CD4-positive, alpha-beta T cell (primary cell): ENCODE measurements at regions of chr7 and their contacts with region 1.

Region 1: GRCh38 chr7:140924019-140924820 is 509 bp downstream of the BRAF start:
- DNase-seq: peak; percentile 46 to 94 (median 74)
- ATAC-seq: peak; percentile 61
- H3K4me3 ChIP-seq: peak overlapping the region; percentile 92
- H3K4me3 Mint-ChIP-seq: no peak overlapping the region
- H3K27ac ChIP-seq: peak overlapping the region; percentile 90 to 99
- H3K27ac Mint-ChIP-seq: no peak overlapping the region
- H3K4me1 ChIP-seq: peaks cover 12% of the 10 kb centered on the region
- H3K4me1 Mint-ChIP-seq: peaks cover 28% of the 10 kb centered on the region
- H3K27me3 ChIP-seq: no peaks in the 10 kb centered on the region
- H3K27me3 Mint-ChIP-seq: peaks cover 4% of the 10 kb centered on the region
- CTCF ChIP-seq: peak; percentile 13

Region 2: GRCh38 chr7:140397784-140398750 is 526.2 kb before region 1 on chr7 and contains the start of gene SLC37A3:
- CTCF ChIA-PET with region 1: no interaction called
- POLR2A ChIA-PET with region 1: no interaction called
- intact Hi-C with region 1: loop called in 1 of 2 experiments (anchors 10 kb)
- DNase-seq: peak; percentile 75 to 91 (median 84)
- ATAC-seq: peak; percentile 98
- H3K4me3 ChIP-seq: peak within 1 kb of the TSS; percentile 79
- H3K4me3 Mint-ChIP-seq: peak within 1 kb of the TSS; percentile 86
- H3K27ac ChIP-seq: peak within 1 kb of the TSS in 1 of 2 donors; percentile 53
- H3K27ac Mint-ChIP-seq: peak within 1 kb of the TSS; percentile 64
- H3K4me1 ChIP-seq: peaks cover 22% of the 10 kb centered on the region
- H3K4me1 Mint-ChIP-seq: peaks cover 33% of the 10 kb centered on the region
- H3K27me3 ChIP-seq: no peaks in the 10 kb centered on the region
- H3K27me3 Mint-ChIP-seq: no peaks in the 10 kb centered on the region
- CTCF ChIP-seq: no peak
- total RNA-seq, gene SLC37A3: 23.5 to 25.6 TPM

Region 3: DNA sequence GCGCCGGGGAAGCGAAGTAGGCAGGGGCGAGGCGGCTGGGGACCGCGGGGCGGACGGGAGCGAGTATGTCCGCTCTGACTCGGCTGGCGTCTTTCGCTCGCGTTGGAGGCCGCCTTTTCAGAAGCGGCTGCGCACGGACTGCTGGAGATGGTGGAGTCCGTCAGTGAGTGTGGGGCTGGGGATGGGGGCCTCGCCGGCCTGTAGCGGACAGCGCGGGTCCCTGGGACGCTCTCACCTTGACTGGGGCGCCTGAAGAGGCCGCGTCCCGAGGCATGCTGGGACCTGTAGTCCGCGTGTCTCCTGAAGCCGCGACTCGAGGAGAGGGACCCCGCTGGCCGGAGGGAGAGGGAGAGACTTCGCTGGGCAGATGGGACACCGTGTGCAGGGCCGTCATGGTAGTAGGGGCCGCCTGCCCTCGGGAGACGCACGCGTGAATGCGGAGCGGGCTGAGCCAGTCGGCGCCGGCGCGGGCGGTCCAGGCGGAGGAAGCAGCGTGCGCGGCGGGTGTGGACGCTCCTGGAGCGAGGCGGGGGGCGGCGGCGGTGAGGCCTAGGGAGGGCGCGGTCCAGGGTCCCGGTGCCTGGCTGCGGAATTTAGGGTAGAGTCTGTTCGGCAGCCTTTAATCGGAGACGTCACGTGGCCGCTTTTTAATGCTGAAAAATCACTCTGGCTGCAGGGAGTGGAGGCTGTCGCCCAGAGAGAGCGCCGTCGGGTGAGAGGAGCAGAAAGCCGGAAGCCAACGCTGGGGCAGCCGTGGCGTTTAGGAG is 227.4 kb before region 1 on chr7 and contains the start of gene NDUFB2:
- CTCF ChIA-PET with region 1: no interaction called
- POLR2A ChIA-PET with region 1: no interaction called
- intact Hi-C with region 1: loop called in 1 of 2 experiments (anchors 5 kb)
- DNase-seq: peak; percentile 43 to 86 (median 58)
- ATAC-seq: peak; percentile 75
- H3K4me3 ChIP-seq: peak within 1 kb of the TSS; percentile 97
- H3K4me3 Mint-ChIP-seq: peak within 1 kb of the TSS; percentile 100
- H3K27ac ChIP-seq: peak within 1 kb of the TSS; percentile 91 to 96
- H3K27ac Mint-ChIP-seq: peak within 1 kb of the TSS; percentile 100
- H3K4me1 ChIP-seq: peaks cover 33% of the 10 kb centered on the region
- H3K4me1 Mint-ChIP-seq: peaks cover 38% of the 10 kb centered on the region
- H3K27me3 ChIP-seq: no peaks in the 10 kb centered on the region
- H3K27me3 Mint-ChIP-seq: no peaks in the 10 kb centered on the region
- CTCF ChIP-seq: no peak
- total RNA-seq, gene NDUFB2: 73.7 to 84.4 TPM

Region 4: GRCh38 chr7:140810830-140811556 is 113.2 kb before region 1 on chr7:
- CTCF ChIA-PET with region 1: interaction called, 4 read pairs
- POLR2A ChIA-PET with region 1: interaction called, 12 read pairs
- intact Hi-C with region 1: loop called in 1 of 2 experiments (anchors 2 kb)
- DNase-seq: peak; percentile 6 to 84 (median 44)
- ATAC-seq: peak; percentile 84
- H3K4me3 ChIP-seq: no peak overlapping the region
- H3K4me3 Mint-ChIP-seq: no peak overlapping the region
- H3K27ac ChIP-seq: no peak overlapping the region
- H3K27ac Mint-ChIP-seq: no peak overlapping the region
- H3K4me1 ChIP-seq: no peaks in the 10 kb centered on the region
- H3K4me1 Mint-ChIP-seq: peaks cover 13% of the 10 kb centered on the region
- H3K27me3 ChIP-seq: no peaks in the 10 kb centered on the region
- H3K27me3 Mint-ChIP-seq: no peaks in the 10 kb centered on the region
- CTCF ChIP-seq: peak; percentile 81

Region 5: DNA sequence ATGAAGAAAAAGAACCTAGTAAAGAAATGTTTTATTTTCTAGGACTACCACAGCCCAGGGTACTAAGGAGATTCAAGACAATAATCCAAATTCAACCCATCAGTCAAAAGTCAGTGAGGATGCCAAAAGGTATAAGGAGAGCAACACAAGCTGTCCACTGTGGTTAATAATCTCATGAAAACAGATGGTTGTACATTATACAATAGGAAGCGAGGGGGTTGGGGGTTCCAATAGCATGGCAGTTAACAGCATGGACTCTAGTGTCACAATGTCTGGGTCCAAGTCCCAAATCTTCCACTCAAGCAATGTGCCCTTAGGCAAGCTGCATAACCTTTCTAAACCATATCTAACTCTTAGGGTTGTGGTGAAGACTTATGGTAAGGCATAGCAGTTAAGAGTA is 34.6 kb before region 1 on chr7:
- CTCF ChIA-PET with region 1: interaction called, 3 read pairs
- POLR2A ChIA-PET with region 1: no interaction called
- intact Hi-C with region 1: loop called in 1 of 2 experiments (anchors 5 kb)
- DNase-seq: no peak
- ATAC-seq: no peak
- H3K4me3 ChIP-seq: no peak overlapping the region
- H3K4me3 Mint-ChIP-seq: no peak overlapping the region
- H3K27ac ChIP-seq: no peak overlapping the region
- H3K27ac Mint-ChIP-seq: no peak overlapping the region
- H3K4me1 ChIP-seq: peaks cover 6% of the 10 kb centered on the region
- H3K4me1 Mint-ChIP-seq: peaks cover 85% of the 10 kb centered on the region
- H3K27me3 ChIP-seq: no peaks in the 10 kb centered on the region
- H3K27me3 Mint-ChIP-seq: no peaks in the 10 kb centered on the region
- CTCF ChIP-seq: no peak